ENCODE measurements at regions of chr2 and their contacts with region 1.

Region 1: GRCh38 chr2:33583194-33583938 is 15.7 kb downstream of the FAM98A start:
- DNase-seq: no peak
- ATAC-seq: peak; percentile 82
- H3K4me3 Mint-ChIP-seq: peak overlapping the region; percentile 8
- H3K27ac Mint-ChIP-seq: peak overlapping the region; percentile 95
- H3K4me1 Mint-ChIP-seq: peaks cover 52% of the 10 kb centered on the region
- H3K27me3 Mint-ChIP-seq: no peaks in the 10 kb centered on the region
- CTCF ChIP-seq: peak; percentile 53

Region 2: GRCh38 chr2:33412920-33413319 is 170.4 kb before region 1 on chr2:
- CTCF ChIA-PET with region 1: interaction called, 16 read pairs
- POLR2A ChIA-PET with region 1: no interaction called
- DNase-seq: no peak
- ATAC-seq: peak; percentile 63
- H3K4me3 Mint-ChIP-seq: no peak overlapping the region
- H3K27ac Mint-ChIP-seq: no peak overlapping the region
- H3K4me1 Mint-ChIP-seq: peaks cover 10% of the 10 kb centered on the region; the same call in 1 of the 2 replicates
- H3K27me3 Mint-ChIP-seq: no peaks in the 10 kb centered on the region
- CTCF ChIP-seq: no peak

Region 3: GRCh38 chr2:33419581-33420200 is 163.7 kb before region 1 on chr2:
- CTCF ChIA-PET with region 1: interaction called, 11 read pairs
- POLR2A ChIA-PET with region 1: no interaction called
- DNase-seq: no peak
- ATAC-seq: peak; percentile 60
- H3K4me3 Mint-ChIP-seq: no peak overlapping the region
- H3K27ac Mint-ChIP-seq: no peak overlapping the region
- H3K4me1 Mint-ChIP-seq: peaks cover 9% of the 10 kb centered on the region
- H3K27me3 Mint-ChIP-seq: no peaks in the 10 kb centered on the region
- CTCF ChIP-seq: no peak

Region 4: GRCh38 chr2:33441235-33441810 is 142.0 kb before region 1 on chr2:
- CTCF ChIA-PET with region 1: interaction called, 19 read pairs
- POLR2A ChIA-PET with region 1: no interaction called
- DNase-seq: peak; percentile 52
- ATAC-seq: peak; percentile 96
- H3K4me3 Mint-ChIP-seq: no peak overlapping the region
- H3K27ac Mint-ChIP-seq: no peak overlapping the region
- H3K4me1 Mint-ChIP-seq: peaks cover 12% of the 10 kb centered on the region
- H3K27me3 Mint-ChIP-seq: no peaks in the 10 kb centered on the region
- CTCF ChIP-seq: peak; percentile 19; the same call in 1 of the 2 replicates

Region 5: GRCh38 chr2:33599175-33599942 is 16.0 kb after region 1 on chr2 and contains the start of gene FAM98A:
- CTCF ChIA-PET with region 1: interaction called, 15 read pairs
- POLR2A ChIA-PET with region 1: no interaction called
- DNase-seq: peak; percentile 93
- ATAC-seq: peak; percentile 84
- H3K4me3 Mint-ChIP-seq: peak within 1 kb of the TSS; percentile 95
- H3K27ac Mint-ChIP-seq: peak within 1 kb of the TSS; percentile 81
- H3K4me1 Mint-ChIP-seq: peaks cover 50% of the 10 kb centered on the region
- H3K27me3 Mint-ChIP-seq: no peaks in the 10 kb centered on the region
- CTCF ChIP-seq: no peak
- total RNA-seq, gene FAM98A: 66.3 to 91.1 TPM (median 78.4 TPM) in 3 replicates

Measured in WTC11 (cell line).